Psoas muscle (tissue), 8 donors: ENCODE measurements at regions of chr21 and their contacts with region 1.

Region 1: DNA sequence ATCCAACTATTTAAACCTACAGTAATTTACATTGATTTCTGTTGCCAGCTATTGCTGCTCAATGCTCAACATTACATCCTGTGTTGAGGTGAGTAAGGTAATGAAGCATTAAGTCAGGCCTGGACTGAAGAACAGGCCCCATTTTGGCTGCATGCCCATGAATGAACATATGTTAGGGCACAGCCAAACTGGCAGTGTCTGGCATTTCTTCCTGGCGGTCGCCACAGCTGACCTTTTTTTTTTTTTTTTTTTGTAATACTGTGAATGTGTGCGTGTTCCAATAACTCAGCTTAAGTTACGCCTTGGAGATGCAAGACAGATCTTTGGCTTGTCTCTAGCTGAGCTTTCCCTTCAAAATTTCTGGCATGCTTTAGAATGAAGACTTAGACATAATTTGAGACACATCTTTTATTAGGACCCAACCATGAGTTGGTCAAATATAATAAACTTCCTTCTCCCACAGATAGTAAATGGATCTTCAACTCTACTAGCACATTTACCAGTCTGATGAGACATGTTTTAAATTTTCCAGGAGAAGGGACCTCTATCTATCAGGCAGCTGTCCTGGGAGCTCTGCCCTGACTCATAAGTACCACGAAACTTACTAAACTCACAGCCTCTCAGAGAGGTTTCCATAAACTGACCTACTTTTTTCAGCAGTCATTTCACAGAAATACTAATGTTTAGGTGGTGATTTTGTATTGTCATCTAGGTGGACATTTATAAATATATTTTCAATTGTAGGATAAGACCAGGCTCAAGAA is 341.1 kb upstream of the RUNX1 start:
- DNase-seq: no peak
- ATAC-seq: peak; percentile 72 to 83 (median 77)
- H3K4me3 ChIP-seq: no peak overlapping the region
- H3K27ac ChIP-seq: peak overlapping the region; percentile 59
- H3K4me1 ChIP-seq: no peaks in the 10 kb centered on the region
- H3K27me3 ChIP-seq: no peaks in the 10 kb centered on the region
- CTCF ChIP-seq: no peak

Region 2: GRCh38 chr21:35179990-35180540 is 210.1 kb before region 1 on chr21:
- intact Hi-C with region 1: loop called in 1 of 2 experiments (anchors 5 kb)
- DNase-seq: no peak
- ATAC-seq: peak in 3 of 4 donors; percentile 42 to 56 (median 56)
- H3K4me3 ChIP-seq: no peak overlapping the region
- H3K27ac ChIP-seq: no peak overlapping the region
- H3K4me1 ChIP-seq: peaks cover 8% of the 10 kb centered on the region
- H3K27me3 ChIP-seq: no peaks in the 10 kb centered on the region
- CTCF ChIP-seq: no peak